Left ventricle myocardium inferior (tissue), 1 donor: ENCODE measurements at regions of chr9 and their contacts with region 1.

Region 1: GRCh38 chr9:126301985-126302603 is 24.5 kb upstream of the MVB12B start:
- DNase-seq: peak; percentile 48
- H3K4me3 ChIP-seq: no peak overlapping the region
- H3K27ac ChIP-seq: no peak overlapping the region
- H3K4me1 ChIP-seq: no peaks in the 10 kb centered on the region
- H3K27me3 ChIP-seq: no peaks in the 10 kb centered on the region
- CTCF ChIP-seq: peak; percentile 83

Region 2: DNA sequence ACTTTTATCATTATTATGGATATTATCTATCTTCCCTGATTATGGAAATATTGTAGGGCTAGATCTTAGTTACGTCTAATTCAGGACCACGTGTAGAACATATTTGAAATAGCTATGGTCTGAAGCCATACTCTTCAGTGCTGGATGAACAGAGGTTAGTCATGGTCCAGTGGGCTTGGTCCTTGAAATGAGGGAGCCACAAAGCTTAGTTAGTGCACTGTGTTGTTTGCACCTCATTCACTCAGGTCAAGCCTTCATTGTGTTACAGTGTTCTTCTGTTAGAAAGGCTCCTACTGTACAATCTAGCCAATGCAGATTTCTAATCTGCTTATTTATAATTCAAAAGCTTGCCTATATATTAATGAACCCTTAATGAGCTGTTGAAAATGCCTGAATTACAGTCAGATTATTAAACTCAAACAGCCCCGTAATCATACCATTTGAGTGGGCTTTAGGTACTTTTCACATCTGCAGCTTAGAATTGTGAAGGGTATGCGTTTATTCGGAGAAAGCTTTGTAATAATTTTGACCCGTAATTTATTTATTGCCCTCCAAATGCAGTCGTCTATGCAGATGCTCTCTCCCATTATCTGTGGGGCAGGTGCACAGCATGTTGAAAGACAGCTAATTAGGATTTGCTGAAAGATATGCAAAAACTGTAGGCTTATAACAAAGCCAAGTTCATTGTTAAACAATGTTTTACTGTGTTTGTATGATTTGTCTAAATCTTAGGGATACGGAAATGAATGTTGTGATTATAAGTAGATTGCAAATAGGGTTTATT is 390.0 kb before region 1 on chr9:
- intact Hi-C with region 1: no loop called
- DNase-seq: no peak
- H3K4me3 ChIP-seq: no peak overlapping the region
- H3K27ac ChIP-seq: no peak overlapping the region
- H3K4me1 ChIP-seq: peaks cover 10% of the 10 kb centered on the region
- H3K27me3 ChIP-seq: no peaks in the 10 kb centered on the region
- CTCF ChIP-seq: no peak

Region 3: DNA sequence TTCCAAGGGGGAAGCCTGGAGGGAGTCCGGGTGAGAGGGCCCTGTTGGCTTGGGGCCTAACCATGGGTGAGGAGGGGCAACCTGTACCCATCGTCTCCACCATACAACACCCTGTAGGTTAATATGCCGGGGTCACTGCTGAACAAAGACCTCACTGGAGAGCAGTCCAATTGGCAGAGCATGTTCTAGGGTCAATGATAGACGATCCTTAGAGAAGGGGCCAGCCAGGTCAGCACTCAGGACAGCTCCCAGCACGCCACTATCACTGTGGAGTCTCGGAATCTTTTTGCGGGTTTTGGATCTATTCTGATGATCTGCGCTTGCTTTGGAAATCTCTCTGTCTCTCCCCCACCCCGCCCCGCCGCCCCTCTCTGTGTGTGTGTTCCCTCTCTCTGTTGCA is 193.9 kb before region 1 on chr9:
- intact Hi-C with region 1: no loop called
- DNase-seq: no peak
- H3K4me3 ChIP-seq: no peak overlapping the region
- H3K27ac ChIP-seq: no peak overlapping the region
- H3K4me1 ChIP-seq: no peaks in the 10 kb centered on the region
- H3K27me3 ChIP-seq: peaks cover 30% of the 10 kb centered on the region
- CTCF ChIP-seq: no peak

Region 4: GRCh38 chr9:126490871-126491567 is 188.9 kb after region 1 on chr9:
- intact Hi-C with region 1: loop called (anchors 10 kb)
- DNase-seq: no peak
- H3K4me3 ChIP-seq: no peak overlapping the region
- H3K27ac ChIP-seq: no peak overlapping the region
- H3K4me1 ChIP-seq: peaks cover 16% of the 10 kb centered on the region
- H3K27me3 ChIP-seq: no peaks in the 10 kb centered on the region
- CTCF ChIP-seq: peak; percentile 96